ENCODE measurements at regions of chr6 and their contacts with region 1.

Region 1: GRCh38 chr6:130969791-130970491 is 93.1 kb downstream of the EPB41L2 start:
- DNase-seq: no peak
- ATAC-seq: peak; percentile 88

Region 2: DNA sequence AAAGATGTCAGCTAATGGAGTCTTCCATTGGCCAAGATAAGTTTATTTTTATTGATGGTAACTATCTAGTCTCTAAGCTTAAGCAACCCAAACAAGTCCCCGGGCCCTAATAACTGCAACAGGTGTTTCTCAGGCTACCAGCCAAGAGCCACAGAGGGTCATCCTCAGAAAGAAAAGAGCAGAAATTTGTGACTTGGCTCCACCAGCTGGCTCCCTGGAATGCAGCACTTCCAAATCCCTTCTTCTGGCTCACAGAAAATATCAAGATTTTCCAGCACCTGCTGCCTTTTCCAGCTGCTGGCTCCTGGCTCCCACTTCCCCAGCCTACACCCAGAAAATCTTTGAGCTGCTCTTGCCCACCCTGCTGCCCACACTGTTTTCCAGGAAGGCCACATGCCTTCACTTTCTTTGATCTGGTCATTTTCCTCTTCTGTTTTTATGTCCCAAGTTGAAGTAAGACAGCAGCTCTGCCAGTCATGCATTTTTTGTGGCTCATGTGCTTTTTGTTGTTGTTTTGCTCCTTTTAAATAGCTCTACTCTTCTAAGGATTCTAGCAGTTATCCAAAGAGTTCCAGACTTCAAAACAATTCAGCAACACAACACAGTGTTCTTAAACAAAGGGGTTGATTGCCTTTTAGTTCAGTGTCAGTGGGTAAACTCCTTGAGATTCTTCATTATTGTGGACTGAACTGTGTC is 293.7 kb before region 1 on chr6:
- intact Hi-C with region 1: no loop called
- DNase-seq: no peak
- ATAC-seq: no peak

Region 3: GRCh38 chr6:131001111-131001736 is 31.3 kb after region 1 on chr6:
- intact Hi-C with region 1: loop called (anchors 5 kb)
- DNase-seq: no peak
- ATAC-seq: peak; percentile 44

Region 4: DNA sequence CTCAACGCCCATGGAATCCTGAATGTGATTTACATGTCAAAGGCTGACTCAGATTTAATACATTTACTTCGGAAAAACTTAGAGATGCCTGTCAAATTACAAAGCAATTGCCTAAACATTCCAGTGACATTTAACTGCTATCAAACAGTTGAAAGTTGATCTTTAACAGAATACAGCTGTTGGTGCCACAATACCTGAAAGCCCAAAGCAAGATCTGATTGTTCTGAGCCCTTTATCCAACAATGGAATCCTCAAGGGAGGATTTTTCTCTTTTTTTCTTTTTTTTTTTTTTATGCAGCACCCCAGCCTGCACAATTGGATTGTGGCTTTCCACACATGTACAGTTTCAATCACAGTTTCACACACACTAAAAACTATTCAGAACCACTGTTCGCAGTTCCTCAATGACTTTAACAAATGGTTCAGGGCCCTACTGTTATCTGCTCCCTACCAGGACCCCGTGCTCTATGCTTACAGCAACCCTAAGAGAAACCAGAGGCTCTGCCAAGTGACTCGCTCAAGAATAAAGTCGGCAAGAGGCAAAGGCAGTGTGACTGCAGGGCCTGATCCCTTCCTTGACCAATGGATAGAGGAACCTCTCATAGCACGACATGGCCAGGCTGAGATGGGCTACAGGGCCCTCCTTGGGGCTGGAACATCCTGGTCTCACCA is 59.8 kb after region 1 on chr6:
- intact Hi-C with region 1: no loop called
- DNase-seq: no peak
- ATAC-seq: peak; percentile 54